Posterior vena cava (tissue), 2 donors: ENCODE measurements at regions of chr7 and their contacts with region 1.

Region 1: GRCh38 chr7:99040104-99040958 is 103.6 kb downstream of the SMURF1 start:
- DNase-seq: peak; percentile 92

Region 2: DNA sequence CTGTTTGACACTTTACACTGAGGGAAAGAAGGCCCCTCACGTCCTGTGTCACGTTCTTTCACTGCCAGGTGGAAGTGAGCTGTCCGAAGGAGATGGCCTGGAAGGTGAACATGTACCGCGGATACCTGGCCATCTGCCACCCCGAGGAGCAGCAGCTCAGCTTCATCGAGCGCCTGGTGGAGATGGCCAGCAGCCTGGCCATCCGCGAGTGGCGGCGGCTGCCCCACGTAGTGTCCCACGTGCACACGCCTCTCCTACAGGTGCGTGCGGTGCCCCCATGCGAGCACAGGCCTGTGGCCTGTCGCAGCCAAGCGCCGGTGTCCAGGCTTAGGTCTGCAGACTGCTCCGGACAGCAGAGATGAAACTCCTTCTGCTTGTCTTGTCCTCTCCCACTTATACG is 58.6 kb before region 1 on chr7:
- intact Hi-C with region 1: loop called in 1 of 2 experiments (anchors 2 kb)
- DNase-seq: no peak

Region 3: DNA sequence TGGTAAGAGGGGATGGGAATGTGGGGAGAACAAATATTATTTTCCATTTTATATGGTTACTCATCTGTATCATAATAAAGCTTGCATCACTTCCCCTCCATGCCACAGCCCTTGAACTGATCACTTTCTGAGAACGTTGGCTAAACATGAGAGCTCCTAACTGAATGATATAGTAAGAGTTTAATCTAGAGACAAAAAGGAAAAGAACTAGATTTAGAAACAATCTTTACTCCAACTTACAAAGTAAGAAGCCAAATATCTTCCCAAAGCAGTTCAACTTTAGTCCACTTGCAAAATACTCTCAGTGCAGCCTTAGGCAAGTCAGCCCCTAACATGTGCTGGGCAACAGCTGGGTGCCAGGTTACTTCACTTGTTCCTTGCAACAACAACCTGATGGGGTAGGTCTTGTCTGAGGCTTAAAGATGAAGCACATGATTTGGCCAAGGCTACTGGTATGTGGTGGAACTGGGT is 83.3 kb after region 1 on chr7:
- intact Hi-C with region 1: loop called in 1 of 2 experiments (anchors 10 kb)
- DNase-seq: no peak

Region 4: GRCh38 chr7:99312316-99313203 is 272.2 kb after region 1 on chr7:
- intact Hi-C with region 1: loop called (anchors 2 to 5 kb)
- DNase-seq: peak; percentile 82